PC-3 (cell line): ENCODE measurements at regions of chr1 and their contacts with region 1.

Region 1: GRCh38 chr1:170685166-170685565 is 21.2 kb downstream of the PRRX1 start:
- DNase-seq: no peak
- ATAC-seq: no peak
- H3K4me3 ChIP-seq: no peak overlapping the region
- H3K27ac ChIP-seq: no peak overlapping the region
- H3K4me1 ChIP-seq: no peaks in the 10 kb centered on the region
- H3K27me3 ChIP-seq: no peaks in the 10 kb centered on the region
- CTCF ChIP-seq: no peak

Region 2: GRCh38 chr1:170881268-170882265 is 196.4 kb after region 1 on chr1:
- CTCF ChIA-PET with region 1: no interaction called
- POLR2A ChIA-PET with region 1: no interaction called
- intact Hi-C with region 1: loop called (anchors 2 kb)
- DNase-seq: peak; percentile 70
- ATAC-seq: peak; percentile 81
- H3K4me3 ChIP-seq: peak overlapping the region; percentile 18; the same call in 1 of the 2 replicates
- H3K27ac ChIP-seq: no peak overlapping the region
- H3K4me1 ChIP-seq: no peaks in the 10 kb centered on the region
- H3K27me3 ChIP-seq: peaks cover 63% of the 10 kb centered on the region
- CTCF ChIP-seq: peak; percentile 90

Region 3: DNA sequence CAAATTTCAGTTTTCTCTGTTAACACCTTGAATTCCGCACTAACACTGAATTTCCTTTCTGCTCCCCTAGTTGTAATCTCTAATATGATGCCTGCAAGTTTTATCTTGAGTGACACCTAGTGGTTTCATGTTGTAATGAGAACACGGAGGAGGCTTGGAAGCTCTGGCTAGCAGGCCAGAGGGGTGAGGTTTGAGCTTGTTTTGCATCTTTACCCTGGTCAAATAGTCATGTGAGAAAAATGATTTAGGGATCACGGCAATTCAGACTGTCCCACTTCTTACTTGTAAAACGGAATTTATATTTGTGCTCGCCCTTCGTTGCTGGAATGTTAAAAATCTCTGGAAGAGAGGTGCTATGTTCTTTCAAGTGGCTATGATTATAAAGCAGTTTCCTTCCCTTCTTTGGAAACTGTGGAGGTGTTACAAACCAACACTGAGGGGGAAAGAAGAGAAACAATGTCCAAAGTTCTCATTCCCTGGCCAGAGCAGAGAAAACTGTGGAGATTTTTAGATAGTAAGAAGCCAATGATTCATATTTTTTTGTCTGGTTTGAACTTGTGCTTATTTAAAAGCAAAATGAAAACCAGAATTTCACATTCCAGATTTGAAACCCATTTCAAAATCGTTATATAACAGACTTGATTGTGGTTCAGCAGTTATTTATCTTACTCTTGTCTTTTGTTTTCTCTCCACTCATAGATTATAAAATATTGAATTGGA is 244.8 kb after region 1 on chr1:
- CTCF ChIA-PET with region 1: no interaction called
- POLR2A ChIA-PET with region 1: no interaction called
- intact Hi-C with region 1: loop called (anchors 5 kb)
- DNase-seq: peak; percentile 84
- ATAC-seq: peak; percentile 98
- H3K4me3 ChIP-seq: no peak overlapping the region
- H3K27ac ChIP-seq: no peak overlapping the region
- H3K4me1 ChIP-seq: no peaks in the 10 kb centered on the region
- H3K27me3 ChIP-seq: peaks cover 37% of the 10 kb centered on the region
- CTCF ChIP-seq: peak; percentile 97